HepG2 (cell line): ENCODE measurements at regions of chr16 and their contacts with region 1.

Region 1: DNA sequence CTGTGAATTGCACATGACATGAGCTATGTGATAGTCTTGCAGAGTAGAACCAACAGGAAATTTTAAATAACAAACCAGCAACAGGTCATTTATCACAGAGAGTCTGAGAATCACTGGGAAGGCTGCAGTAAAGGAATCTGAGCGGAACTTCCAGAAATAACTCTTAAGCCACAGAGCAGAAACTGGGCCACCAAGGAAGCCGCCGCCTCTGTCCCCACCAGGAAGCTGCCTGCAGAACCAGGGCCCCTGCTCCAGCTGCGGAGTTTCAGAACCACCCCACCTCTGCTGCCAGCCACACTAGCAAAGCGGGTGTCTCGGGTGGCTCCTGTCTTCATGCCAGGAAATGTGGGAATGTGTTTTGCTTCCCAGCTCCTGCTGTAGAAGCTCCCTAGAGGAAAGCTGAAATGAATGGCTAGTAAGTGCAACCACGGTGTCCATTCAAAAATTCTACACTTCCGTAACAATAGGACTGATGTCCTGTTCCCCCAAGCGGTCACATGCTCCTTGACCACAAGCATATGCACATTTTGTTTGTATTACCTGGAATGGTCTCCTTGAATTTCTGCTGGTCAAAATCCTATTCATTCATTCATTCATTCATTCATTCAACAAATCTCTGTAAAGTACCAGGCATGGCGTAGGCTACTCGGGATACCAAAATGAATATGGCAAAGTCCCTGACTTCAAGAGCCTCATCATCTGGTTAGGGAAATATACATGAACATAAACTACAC is 7.7 kb upstream of the ITPRIPL2 start:
- DNase-seq: no peak
- ATAC-seq: no peak
- H3K4me3 ChIP-seq: no peak overlapping the region
- H3K27ac ChIP-seq: no peak overlapping the region
- H3K4me1 ChIP-seq: peaks cover 66% of the 10 kb centered on the region
- H3K27me3 ChIP-seq: peaks cover 2 to 16% of the 10 kb centered on the region in 2 experiments; a peak in 4 of 5 replicates
- CTCF ChIP-seq: no peak
- EP300 ChIP-seq: no peak
- POLR2A ChIP-seq: no peak
- RAD21 ChIP-seq: no peak

Region 2: DNA sequence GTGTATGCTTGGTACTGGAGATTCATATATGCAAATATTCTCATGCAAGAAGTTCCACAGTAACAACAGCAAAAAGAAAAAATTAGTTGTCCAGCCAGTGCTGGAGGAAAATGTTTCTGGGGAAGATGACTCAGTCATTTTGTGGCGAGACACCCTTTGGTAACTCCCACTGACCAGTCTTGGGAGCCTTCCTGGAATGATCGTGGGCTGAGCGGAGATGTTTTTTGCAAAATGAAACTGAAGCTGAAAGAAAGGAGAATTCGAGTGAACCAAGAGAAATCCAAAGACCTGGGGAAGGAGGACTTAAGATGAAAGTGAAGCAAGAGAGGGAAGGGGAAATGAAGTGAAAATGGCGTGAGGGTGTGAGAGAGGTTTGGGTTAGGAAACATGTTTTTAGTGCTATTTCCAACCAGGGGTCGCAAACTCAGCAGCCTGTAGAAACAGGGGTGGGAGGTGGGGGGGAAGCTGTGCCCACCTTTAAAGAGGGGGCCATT is 12.9 kb after region 1 on chr16:
- CTCF ChIA-PET with region 1: no interaction called
- POLR2A ChIA-PET with region 1: interaction called, 14 read pairs
- in situ Hi-C with region 1: no loop called
- intact Hi-C with region 1: no loop called
- DNase-seq: no peak
- ATAC-seq: no peak
- H3K4me3 ChIP-seq: no peak overlapping the region
- H3K27ac ChIP-seq: no peak overlapping the region
- H3K4me1 ChIP-seq: peaks cover 55% of the 10 kb centered on the region
- H3K27me3 ChIP-seq: no peaks in the 10 kb centered on the region
- CTCF ChIP-seq: no peak
- EP300 ChIP-seq: no peak
- POLR2A ChIP-seq: no peak
- RAD21 ChIP-seq: no peak

Region 3: GRCh38 chr16:19316846-19317245 is 210.8 kb after region 1 on chr16:
- CTCF ChIA-PET with region 1: no interaction called
- POLR2A ChIA-PET with region 1: no interaction called
- in situ Hi-C with region 1: no loop called
- intact Hi-C with region 1: no loop called
- DNase-seq: no peak
- ATAC-seq: no peak
- H3K4me3 ChIP-seq: no peak overlapping the region
- H3K27ac ChIP-seq: no peak overlapping the region
- H3K4me1 ChIP-seq: no peaks in the 10 kb centered on the region
- H3K27me3 ChIP-seq: peaks cover 2 to 5% of the 10 kb centered on the region in 2 experiments; a peak in 1 of 5 replicates
- CTCF ChIP-seq: no peak
- EP300 ChIP-seq: no peak
- POLR2A ChIP-seq: no peak
- RAD21 ChIP-seq: no peak

Region 4: DNA sequence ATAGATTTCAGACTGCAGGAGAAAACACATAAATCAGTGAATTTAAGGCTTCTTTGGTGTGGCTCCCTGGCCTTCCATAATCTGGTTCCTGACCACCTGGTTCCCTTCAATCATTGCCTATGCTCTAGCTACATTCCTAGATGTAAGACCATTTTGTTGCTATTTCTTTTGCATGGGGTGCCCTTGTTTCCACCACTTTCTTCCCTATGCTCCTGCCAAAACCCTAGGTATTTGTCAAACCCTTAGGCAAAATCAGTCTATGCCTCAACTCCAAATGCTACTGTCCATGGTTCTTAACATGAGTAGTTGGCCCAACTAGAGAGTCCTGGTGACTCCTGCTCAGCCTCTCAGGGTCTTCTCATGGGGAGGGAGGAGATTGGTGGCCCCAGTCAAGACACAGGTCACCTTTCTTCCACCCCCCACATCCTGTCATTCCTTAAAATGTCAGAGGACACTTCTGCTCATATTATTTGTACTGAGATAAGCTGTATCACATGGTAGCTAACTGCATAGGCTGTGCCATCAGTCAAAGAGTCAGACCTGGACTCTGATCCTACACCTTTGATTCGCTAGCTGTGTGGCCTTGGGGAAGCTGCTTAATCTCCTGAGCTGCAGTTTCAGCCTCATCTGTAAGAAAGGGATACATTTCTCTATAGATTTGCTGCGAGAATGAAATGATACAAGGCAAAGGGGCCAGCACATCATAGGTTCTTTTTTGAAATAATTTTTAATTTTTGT is 1318.2 kb after region 1 on chr16:
- CTCF ChIA-PET with region 1: no interaction called
- POLR2A ChIA-PET with region 1: no interaction called
- in situ Hi-C with region 1: no loop called
- intact Hi-C with region 1: loop called (anchors 10 kb)
- DNase-seq: peak; percentile 88
- ATAC-seq: peak; percentile 88
- H3K4me3 ChIP-seq: no peak overlapping the region
- H3K27ac ChIP-seq: peak overlapping the region; percentile 71
- H3K4me1 ChIP-seq: peaks cover 58% of the 10 kb centered on the region
- H3K27me3 ChIP-seq: no peaks in the 10 kb centered on the region
- CTCF ChIP-seq: no peak; the same call in 1 of the 2 replicates
- EP300 ChIP-seq: peak in 1 of 2 experiments; percentile 92; a peak in 2 of 4 replicates
- POLR2A ChIP-seq: no peak
- RAD21 ChIP-seq: no peak